Activated CD4-positive, alpha-beta memory T cell treated with anti-CD3 and anti-CD28 coated beads for 36 hours (primary cell): ENCODE measurements at regions of chr1 and their contacts with region 1.

Region 1: DNA sequence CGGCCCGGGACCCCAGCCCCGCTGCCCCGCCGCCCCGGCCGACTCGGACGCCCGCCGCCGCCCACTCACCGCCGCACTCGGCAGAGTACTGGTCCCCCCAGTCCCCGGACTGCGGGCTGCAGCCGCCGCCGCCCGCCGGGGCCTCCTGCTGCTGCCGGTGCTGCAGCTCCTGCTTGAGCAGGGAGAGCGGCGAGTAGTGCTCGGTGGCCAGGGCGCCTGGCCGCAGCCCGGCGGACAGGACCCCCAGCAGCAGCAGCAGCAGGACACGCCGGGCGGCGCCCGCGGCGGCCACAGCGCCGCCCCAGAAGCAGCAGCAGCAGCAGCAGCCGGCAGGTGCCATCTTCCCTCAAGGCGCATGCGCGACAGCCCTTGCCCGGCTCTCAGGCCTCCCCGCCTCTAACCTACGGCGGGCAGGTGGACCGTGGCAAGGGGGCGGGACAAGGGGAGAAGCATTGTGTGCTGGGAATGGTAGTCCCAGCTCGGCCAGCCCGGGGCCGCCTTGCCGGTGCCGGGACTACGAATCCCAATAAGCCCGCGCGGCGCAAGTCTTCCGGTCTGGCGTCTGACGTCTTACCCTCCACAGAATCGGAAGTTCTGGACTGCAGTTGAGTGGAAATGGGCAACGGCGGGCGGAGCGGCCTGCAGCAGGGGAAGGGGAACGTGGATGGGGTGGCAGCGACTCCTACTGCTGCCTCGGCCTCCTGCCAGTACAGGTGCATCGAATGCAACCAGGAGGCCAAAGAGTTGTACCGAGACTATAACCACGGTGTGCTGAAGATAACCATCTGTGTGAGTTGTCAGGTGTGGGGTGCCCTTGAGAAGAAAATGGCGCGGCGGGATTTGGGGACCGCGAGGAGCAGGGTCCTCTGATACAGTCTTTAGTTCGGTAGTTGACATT is at the starts of genes ARV1 and TTC13:
- DNase-seq: peak; percentile 98
- H3K4me3 Mint-ChIP-seq: peak within 1 kb of the TSS; percentile 99
- H3K27ac Mint-ChIP-seq: peak within 1 kb of the TSS; percentile 94
- H3K4me1 Mint-ChIP-seq: peaks cover 29% of the 10 kb centered on the region
- H3K27me3 Mint-ChIP-seq: no peaks in the 10 kb centered on the region
- total RNA-seq, gene ARV1: 12.7 to 13.8 TPM
- total RNA-seq, gene TTC13: 17.3 to 18.3 TPM

Region 2: GRCh38 chr1:230642263-230642959 is 336.3 kb before region 1 on chr1 and contains the start of gene COG2:
- CTCF ChIA-PET with region 1: interaction called, 3 read pairs
- POLR2A ChIA-PET with region 1: interaction called, 3 read pairs
- intact Hi-C with region 1: loop called (anchors 1 kb)
- DNase-seq: peak; percentile 96
- H3K4me3 Mint-ChIP-seq: peak within 1 kb of the TSS; percentile 98
- H3K27ac Mint-ChIP-seq: peak within 1 kb of the TSS; percentile 92
- H3K4me1 Mint-ChIP-seq: peaks cover 46% of the 10 kb centered on the region
- H3K27me3 Mint-ChIP-seq: peaks cover 14% of the 10 kb centered on the region
- total RNA-seq, gene COG2: 29.6 to 32.3 TPM

Region 3: GRCh38 chr1:230758709-230759368 is 219.9 kb before region 1 on chr1:
- CTCF ChIA-PET with region 1: no interaction called
- POLR2A ChIA-PET with region 1: no interaction called
- intact Hi-C with region 1: no loop called
- DNase-seq: no peak
- H3K4me3 Mint-ChIP-seq: no peak overlapping the region
- H3K27ac Mint-ChIP-seq: no peak overlapping the region
- H3K4me1 Mint-ChIP-seq: no peaks in the 10 kb centered on the region
- H3K27me3 Mint-ChIP-seq: peaks cover 2% of the 10 kb centered on the region

Region 4: GRCh38 chr1:230917284-230918135 is 61.2 kb before region 1 on chr1:
- CTCF ChIA-PET with region 1: interaction called, 8 read pairs
- POLR2A ChIA-PET with region 1: no interaction called
- intact Hi-C with region 1: loop called (anchors 1 kb)
- DNase-seq: peak; percentile 77
- H3K4me3 Mint-ChIP-seq: no peak overlapping the region
- H3K27ac Mint-ChIP-seq: no peak overlapping the region
- H3K4me1 Mint-ChIP-seq: no peaks in the 10 kb centered on the region
- H3K27me3 Mint-ChIP-seq: no peaks in the 10 kb centered on the region

Region 5: GRCh38 chr1:231211005-231211857 is 232.5 kb after region 1 on chr1:
- CTCF ChIA-PET with region 1: no interaction called
- POLR2A ChIA-PET with region 1: no interaction called
- intact Hi-C with region 1: loop called (anchors 1 kb)
- DNase-seq: peak; percentile 96
- H3K4me3 Mint-ChIP-seq: peak overlapping the region; percentile 76
- H3K27ac Mint-ChIP-seq: peak overlapping the region; percentile 51
- H3K4me1 Mint-ChIP-seq: peaks cover 11% of the 10 kb centered on the region
- H3K27me3 Mint-ChIP-seq: no peaks in the 10 kb centered on the region

Region 6: DNA sequence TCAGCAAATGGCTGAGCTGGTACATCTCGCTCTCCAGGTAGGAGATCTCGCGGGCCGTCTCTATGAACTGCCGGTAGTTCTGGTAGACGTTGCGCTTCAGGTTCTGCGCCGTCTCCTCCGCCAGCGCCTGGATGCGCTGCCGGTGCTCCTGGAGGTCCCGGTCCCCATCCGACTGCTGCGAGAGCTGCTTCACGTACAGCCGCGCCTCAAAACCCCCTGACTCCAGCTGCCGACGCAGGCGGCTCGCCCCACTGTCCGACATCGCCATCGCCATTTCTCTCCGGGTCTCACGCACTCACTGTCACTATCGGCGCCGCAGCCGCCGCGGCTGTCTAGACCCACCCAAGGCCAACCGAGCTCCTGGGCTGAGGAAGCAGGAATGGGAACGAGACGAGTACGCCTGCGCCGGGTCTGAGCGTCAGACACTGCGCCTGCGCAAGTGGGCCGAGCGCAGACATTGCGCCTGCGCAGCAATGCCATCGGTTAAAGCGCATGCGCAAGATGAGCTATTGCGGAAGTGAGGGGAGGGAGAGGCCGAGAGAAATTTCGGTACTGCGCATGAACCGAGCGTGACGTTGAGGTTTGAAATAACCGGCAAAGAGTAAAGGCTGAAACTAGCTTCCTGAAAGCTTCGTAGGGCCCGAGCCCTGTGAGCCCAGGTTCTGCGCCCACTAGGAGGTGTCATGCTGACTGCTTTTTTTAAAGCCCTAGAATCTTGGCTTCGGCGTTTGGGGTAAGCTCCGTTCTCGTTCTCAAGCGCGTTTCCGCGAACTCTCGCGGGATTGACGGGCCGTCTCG is 358.9 kb after region 1 on chr1 and contains the start of gene EXOC8:
- CTCF ChIA-PET with region 1: no interaction called
- POLR2A ChIA-PET with region 1: no interaction called
- intact Hi-C with region 1: loop called (anchors 1 kb)
- DNase-seq: peak; percentile 98
- H3K4me3 Mint-ChIP-seq: peak within 1 kb of the TSS; percentile 100
- H3K27ac Mint-ChIP-seq: peak within 1 kb of the TSS; percentile 98
- H3K4me1 Mint-ChIP-seq: peaks cover 54% of the 10 kb centered on the region
- H3K27me3 Mint-ChIP-seq: peaks cover 3% of the 10 kb centered on the region
- total RNA-seq, gene EXOC8: 14.4 to 15.2 TPM

Region 7: DNA sequence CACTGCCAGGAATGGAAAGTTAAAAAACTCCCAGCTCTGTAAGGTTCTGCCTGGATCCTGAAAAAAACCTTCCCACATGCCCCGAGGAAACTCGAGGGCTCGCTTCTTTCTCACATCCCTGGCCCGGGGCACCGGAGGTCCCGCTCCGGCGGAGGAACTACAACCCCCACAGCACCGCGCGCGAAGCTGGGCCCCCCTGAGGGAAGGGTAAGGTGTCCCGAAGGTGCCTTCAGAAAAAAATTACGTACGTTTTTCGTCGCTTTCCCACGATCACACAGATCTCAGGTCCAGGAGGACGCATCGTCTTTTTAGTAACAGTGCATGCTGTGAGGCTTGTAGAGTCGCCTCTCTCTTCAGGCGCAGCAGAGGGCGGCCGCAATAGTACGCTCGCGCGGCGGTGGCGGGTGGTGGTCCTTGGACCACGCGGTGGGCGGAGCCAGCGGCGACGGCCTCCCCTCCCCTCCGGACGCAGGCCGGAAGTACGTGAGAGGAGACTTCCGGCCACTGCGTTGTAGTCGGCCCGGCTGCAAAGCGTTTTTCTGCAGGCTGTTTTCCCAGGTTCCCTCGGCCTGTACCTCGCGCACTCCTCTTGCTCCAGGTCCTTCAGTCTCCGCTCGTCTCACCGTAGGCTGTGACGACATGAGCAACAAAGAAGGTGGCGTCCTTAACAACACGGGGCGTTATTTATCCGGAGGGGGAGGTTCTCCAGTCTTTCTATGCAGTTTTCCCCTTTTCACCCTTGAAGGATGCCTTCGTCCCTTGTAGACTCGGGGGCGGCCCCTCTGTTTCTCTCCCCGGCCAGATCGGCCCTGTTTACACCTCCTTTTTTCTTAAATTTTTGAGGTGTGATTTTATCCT is 549.7 kb after region 1 on chr1 and contains the start of gene TSNAX:
- CTCF ChIA-PET with region 1: no interaction called
- POLR2A ChIA-PET with region 1: no interaction called
- intact Hi-C with region 1: loop called (anchors 1 kb)
- DNase-seq: peak; percentile 92
- H3K4me3 Mint-ChIP-seq: peak within 1 kb of the TSS; percentile 97
- H3K27ac Mint-ChIP-seq: peak within 1 kb of the TSS; percentile 99
- H3K4me1 Mint-ChIP-seq: peaks cover 46% of the 10 kb centered on the region
- H3K27me3 Mint-ChIP-seq: no peaks in the 10 kb centered on the region
- total RNA-seq, gene TSNAX: 36.4 to 36.5 TPM